ENCODE measurements at regions of chr1 and their contacts with region 1.

Region 1: DNA sequence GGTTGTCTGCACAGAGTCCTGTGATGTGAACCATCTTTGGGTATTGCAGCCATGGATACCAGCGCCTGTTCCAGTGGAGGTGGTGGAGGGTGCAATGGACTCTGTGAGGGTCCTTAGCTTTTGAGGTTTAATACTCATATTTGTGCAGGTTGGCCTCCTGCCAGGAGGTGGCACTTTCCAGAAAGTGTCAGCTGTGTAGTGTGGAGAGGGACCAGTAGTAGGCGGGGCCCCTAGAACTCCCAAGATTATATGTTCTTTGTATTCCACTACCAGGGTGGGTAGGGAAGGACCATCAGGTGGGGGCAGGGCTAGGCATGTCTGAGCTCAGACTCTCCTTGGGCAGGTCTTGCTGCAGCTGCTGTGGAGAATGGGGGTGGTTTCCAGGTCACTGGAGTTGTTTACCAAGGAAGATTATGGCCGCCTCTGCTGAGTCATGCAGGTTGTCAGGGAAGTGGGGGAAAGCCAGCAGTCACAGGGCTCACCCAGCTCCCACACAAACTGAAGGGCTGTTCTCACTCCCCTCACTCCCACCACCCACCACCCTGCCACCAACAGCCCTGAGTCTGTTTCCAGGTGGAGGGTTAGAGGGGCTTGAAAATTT is 31.2 kb upstream of the ZNF678 start:
- DNase-seq: peak; percentile 63
- ATAC-seq: peak; percentile 27; the same call in 1 of the 2 replicates
- H3K4me3 ChIP-seq: no peak overlapping the region
- H3K27ac ChIP-seq: peak overlapping the region; percentile 17; the same call in 1 of the 2 replicates
- H3K4me1 ChIP-seq: peaks cover 6% of the 10 kb centered on the region; the same call in 1 of the 2 replicates
- H3K27me3 ChIP-seq: no peaks in the 10 kb centered on the region
- CTCF ChIP-seq: no peak

Region 2: DNA sequence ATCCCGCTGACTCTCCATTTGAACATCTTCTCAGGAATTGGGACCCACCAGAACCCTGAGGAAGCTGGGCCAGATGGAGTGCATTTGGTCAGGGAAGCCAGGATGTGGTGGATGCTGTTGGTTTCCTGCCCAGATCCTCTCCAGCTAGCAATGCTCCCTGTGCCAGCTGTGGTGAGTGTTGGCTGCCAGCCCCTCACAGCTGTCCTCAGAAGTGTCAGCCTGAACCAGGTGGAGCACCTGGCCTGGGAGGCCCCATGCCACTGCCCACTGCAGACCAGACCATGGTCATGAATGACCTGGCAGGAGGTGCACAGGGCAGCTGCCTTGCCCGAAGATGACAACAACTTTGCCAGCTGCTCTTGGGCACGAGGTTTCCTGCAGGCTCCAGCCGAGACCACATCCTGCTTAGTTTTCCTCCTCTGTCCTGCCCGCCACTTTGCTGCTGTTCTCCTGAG is 337.8 kb after region 1 on chr1:
- CTCF ChIA-PET with region 1: no interaction called
- POLR2A ChIA-PET with region 1: interaction called, 40 read pairs
- intact Hi-C with region 1: no loop called
- DNase-seq: no peak
- ATAC-seq: peak; percentile 60
- H3K4me3 ChIP-seq: no peak overlapping the region
- H3K27ac ChIP-seq: no peak overlapping the region
- H3K4me1 ChIP-seq: no peaks in the 10 kb centered on the region
- H3K27me3 ChIP-seq: peaks cover 15% of the 10 kb centered on the region; the same call in 1 of the 2 replicates
- CTCF ChIP-seq: no peak